ENCODE measurements at regions of chr4 and their contacts with region 1.

Region 1: DNA sequence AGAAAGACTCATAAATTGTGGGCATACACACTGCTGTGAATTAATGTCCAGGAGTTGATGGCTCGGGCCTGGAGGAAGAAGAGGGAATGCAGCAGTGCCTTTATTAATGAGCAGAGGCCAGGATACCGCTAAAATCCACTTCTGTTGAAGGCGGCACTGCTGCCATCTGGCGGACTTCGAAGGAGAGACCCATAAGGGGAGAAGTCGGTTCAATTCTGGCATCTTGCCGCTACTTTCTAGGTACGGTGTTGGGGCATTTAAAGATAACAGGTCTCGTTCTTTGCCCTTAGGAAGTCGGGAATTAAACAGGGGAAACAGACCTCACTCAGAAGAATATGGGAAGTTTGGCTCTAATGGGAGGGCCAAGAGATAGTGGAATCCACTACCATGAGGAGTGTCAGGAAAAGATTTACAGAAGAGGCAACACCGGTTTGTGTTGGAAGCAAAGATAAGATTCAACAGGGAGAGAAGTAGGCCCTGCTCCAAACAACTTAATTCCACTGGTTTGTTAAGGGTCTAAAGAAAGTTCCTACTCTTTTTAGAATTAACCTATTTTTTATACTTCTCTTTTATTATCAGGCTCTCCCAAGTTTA is 133.6 kb upstream of the GIMD1 start:
- DNase-seq: peak; percentile 48
- ATAC-seq: peak; percentile 59 to 62

Region 2: GRCh38 chr4:106266201-106266600 is 236.0 kb before region 1 on chr4:
- intact Hi-C with region 1: loop called in 1 of 2 experiments (anchors 10 kb)
- DNase-seq: no peak
- ATAC-seq: no peak

Region 3: DNA sequence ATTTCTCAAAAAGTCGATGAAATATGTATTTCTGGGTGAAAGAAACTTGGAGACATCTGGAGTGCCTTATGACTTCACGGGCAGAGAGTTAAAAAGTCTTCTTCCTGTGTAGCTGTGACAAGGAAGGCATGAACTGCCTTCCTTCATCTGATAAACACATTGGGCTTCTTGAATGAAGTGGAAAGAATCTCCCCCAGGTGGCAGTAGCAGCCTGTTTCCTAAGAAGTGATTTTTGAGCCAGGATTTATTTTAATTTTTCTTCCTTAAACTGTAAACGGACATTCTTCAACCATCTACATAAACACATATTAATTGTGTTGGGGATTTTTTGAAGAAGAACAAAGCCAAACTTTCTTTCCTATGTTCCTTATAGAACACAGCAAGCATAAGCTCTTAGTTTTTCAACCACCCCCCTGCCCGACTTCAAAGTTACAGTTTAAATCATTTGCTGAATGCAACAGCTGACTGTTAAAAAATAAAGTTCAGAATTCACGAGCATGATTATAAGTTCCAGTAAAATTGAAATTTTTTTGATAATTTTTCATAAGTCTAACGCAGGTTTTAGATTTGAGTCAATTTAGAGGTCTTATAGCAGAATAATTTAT is 132.6 kb before region 1 on chr4:
- intact Hi-C with region 1: loop called in 1 of 2 experiments (anchors 5 kb)
- DNase-seq: no peak
- ATAC-seq: peak in 1 of 2 donors; percentile 19